ENCODE measurements at regions of chr11 and their contacts with region 1.

Region 1: DNA sequence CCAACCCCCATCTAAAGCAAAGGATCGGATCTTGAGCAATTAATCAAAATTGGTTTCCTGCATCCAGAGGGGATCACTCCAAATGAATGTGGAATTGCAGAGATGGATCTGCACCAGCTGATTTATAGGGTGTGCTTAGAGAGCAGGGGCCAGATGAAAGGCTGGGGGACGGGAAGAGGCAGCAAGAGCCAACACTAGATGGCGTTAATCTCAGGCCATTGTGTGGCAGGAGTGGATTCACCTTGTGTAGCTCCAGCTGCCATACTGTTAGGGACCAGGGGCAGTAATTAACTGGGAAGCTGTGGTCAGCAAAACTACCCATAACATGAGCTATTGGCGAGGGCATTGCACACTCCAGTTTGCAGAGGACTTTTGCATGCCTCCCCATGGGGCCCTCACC is 35.6 kb downstream of the SERPINH1 start:
- DNase-seq: peak; percentile 48 to 56
- ATAC-seq: peak; percentile 77 to 92
- H3K4me3 ChIP-seq: no peak overlapping the region
- H3K27ac ChIP-seq: no peak overlapping the region
- H3K4me1 ChIP-seq: no peaks in the 10 kb centered on the region
- CTCF ChIP-seq: peak; percentile 58
- EP300 ChIP-seq: no peak
- POLR2A ChIP-seq: no peak
- RAD21 ChIP-seq: peak; percentile 41 to 51; a peak in 3 of 5 replicates

Region 2: GRCh38 chr11:75582895-75583717 is 14.5 kb before region 1 on chr11:
- CTCF ChIA-PET with region 1: interaction called, 16 read pairs
- POLR2A ChIA-PET with region 1: no interaction called
- DNase-seq: peak; percentile 53 to 59
- ATAC-seq: peak; percentile 79 to 89
- H3K4me3 ChIP-seq: peak overlapping the region; percentile 49
- H3K27ac ChIP-seq: peak overlapping the region; percentile 78 to 88
- H3K4me1 ChIP-seq: no peaks in the 10 kb centered on the region; the same call in 2 of the 3 replicates
- CTCF ChIP-seq: 0 out of 3 replicates have a peak, but pooled peaks have one; percentile 11
- EP300 ChIP-seq: no peak
- POLR2A ChIP-seq: peak; percentile 23; the same call in 1 of the 2 replicates
- RAD21 ChIP-seq: no peak

Region 3: DNA sequence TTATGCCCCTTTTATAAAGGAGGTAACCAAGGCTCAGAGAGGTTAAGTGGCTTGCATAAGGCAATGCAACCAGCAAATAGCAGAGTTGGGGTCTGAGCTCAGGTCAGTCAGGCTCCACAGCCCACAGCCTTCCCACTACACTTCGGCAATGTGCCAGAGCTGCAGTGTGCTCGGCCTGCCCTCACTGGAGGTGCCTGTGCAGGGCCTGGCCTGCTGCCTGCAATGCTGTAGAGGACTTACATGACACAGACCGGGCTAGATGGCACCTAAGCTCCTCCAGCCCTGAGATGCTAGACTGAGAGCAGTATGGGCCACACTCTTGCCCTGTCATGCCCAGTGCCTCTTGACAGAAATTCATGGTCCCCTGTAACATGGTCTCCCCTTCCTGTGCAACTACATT is 14.2 kb after region 1 on chr11:
- CTCF ChIA-PET with region 1: interaction called, 22 read pairs
- POLR2A ChIA-PET with region 1: no interaction called
- DNase-seq: no peak
- ATAC-seq: no peak
- H3K4me3 ChIP-seq: no peak overlapping the region
- H3K27ac ChIP-seq: no peak overlapping the region
- H3K4me1 ChIP-seq: no peaks in the 10 kb centered on the region
- CTCF ChIP-seq: no peak
- EP300 ChIP-seq: no peak
- POLR2A ChIP-seq: no peak
- RAD21 ChIP-seq: no peak

Measured in A549 (cell line).